ENCODE measurements at regions of chr9 and their contacts with region 1.

Region 1: DNA sequence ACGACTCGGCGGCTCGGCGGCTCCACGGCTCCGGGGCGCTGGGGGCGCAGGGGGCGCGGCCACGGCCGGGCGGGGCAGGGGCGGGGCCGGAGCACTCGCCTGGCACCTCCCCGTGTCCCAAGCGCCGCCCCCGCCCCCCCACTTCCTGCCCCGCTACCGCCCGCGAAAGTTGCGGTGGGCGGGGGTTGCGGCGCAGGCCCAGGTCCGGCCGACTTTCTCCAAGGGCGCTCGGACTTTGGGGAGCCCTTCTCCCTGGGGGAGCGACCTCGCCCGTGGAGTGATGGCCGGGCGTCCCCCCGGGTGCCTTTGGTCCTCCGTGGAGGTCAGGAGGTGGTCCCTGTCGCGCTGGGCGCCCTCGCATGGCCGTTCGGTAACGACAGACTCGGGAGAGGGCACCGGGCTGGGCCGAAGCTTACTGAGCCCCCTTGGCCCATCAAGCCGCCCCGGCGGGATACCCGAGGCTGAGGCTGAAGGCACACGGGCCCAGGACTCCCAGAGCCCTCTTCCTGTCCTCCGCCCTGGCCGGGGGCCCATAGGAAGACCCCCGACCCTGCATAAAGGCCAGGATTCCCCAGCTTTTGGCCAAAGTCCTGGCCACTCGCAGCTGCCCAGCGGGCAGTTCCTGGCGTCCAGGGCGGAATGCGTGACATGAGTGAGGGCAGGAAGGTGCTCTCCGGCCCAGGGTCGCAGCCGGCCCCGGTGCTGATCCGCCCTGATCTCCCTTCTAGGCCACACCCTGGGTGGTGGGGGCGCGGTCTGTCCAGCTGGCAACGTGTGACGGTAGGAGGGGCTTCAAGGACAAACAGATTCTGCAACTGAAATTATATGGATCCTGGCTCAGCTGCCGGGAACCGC is 883 bp upstream of the VAV2 start:
- DNase-seq: peak; percentile 52 to 89 (median 72)
- ATAC-seq: peak; percentile 78
- H3K4me3 ChIP-seq: peak overlapping the region; percentile 79
- H3K4me3 Mint-ChIP-seq: peak overlapping the region; percentile 84
- H3K27ac ChIP-seq: no peak overlapping the region
- H3K27ac Mint-ChIP-seq: no peak overlapping the region
- H3K4me1 ChIP-seq: peaks cover 29% of the 10 kb centered on the region
- H3K4me1 Mint-ChIP-seq: no peaks in the 10 kb centered on the region
- H3K27me3 ChIP-seq: peaks cover 6 to 7% of the 10 kb centered on the region in 2 experiments
- H3K27me3 Mint-ChIP-seq: peaks cover 18% of the 10 kb centered on the region
- CTCF ChIP-seq: peak; percentile 48

Region 2: GRCh38 chr9:133532937-133533668 is 459.9 kb before region 1 on chr9:
- CTCF ChIA-PET with region 1: no interaction called
- POLR2A ChIA-PET with region 1: no interaction called
- intact Hi-C with region 1: loop called (anchors 5 to 10 kb)
- DNase-seq: peak; percentile 47 to 83 (median 64)
- ATAC-seq: peak; percentile 82
- H3K4me3 ChIP-seq: no peak overlapping the region
- H3K4me3 Mint-ChIP-seq: peak overlapping the region; percentile 87
- H3K27ac ChIP-seq: no peak overlapping the region
- H3K27ac Mint-ChIP-seq: peak overlapping the region; percentile 85
- H3K4me1 ChIP-seq: peaks cover 26% of the 10 kb centered on the region
- H3K4me1 Mint-ChIP-seq: peaks cover 12% of the 10 kb centered on the region
- H3K27me3 ChIP-seq: peaks cover 0 to 10% of the 10 kb centered on the region in 2 experiments
- H3K27me3 Mint-ChIP-seq: peaks cover 6% of the 10 kb centered on the region
- CTCF ChIP-seq: peak; percentile 32

Region 3: DNA sequence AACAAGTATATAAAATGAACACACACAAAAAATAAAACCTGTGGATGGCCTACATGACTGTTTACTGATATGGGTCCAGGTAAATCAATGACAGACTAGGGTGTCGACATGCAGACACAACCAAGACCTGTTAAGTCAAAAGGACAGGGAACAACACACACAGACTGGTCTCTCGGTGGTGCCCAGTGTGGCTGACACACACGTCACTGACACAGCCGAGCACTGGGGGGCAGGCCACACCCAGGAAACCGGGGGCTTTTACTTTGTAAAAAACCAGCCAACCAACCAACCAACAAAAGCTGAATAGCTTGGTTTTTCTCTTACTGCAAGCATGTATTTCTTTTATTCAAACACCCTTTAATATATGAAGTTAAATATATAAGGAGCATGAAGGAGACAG is 388.8 kb before region 1 on chr9:
- CTCF ChIA-PET with region 1: no interaction called
- POLR2A ChIA-PET with region 1: no interaction called
- intact Hi-C with region 1: loop called in 1 of 2 experiments (anchors 2 kb)
- DNase-seq: peak in 11 of 14 experiments; percentile 13 to 58 (median 42)
- ATAC-seq: peak; percentile 46
- H3K4me3 ChIP-seq: no peak overlapping the region
- H3K4me3 Mint-ChIP-seq: no peak overlapping the region
- H3K27ac ChIP-seq: no peak overlapping the region
- H3K27ac Mint-ChIP-seq: no peak overlapping the region
- H3K4me1 ChIP-seq: peaks cover 8% of the 10 kb centered on the region
- H3K4me1 Mint-ChIP-seq: peaks cover 4% of the 10 kb centered on the region
- H3K27me3 ChIP-seq: peaks cover 14 to 24% of the 10 kb centered on the region in 2 experiments
- H3K27me3 Mint-ChIP-seq: peaks cover 19% of the 10 kb centered on the region
- CTCF ChIP-seq: no peak

Region 4: DNA sequence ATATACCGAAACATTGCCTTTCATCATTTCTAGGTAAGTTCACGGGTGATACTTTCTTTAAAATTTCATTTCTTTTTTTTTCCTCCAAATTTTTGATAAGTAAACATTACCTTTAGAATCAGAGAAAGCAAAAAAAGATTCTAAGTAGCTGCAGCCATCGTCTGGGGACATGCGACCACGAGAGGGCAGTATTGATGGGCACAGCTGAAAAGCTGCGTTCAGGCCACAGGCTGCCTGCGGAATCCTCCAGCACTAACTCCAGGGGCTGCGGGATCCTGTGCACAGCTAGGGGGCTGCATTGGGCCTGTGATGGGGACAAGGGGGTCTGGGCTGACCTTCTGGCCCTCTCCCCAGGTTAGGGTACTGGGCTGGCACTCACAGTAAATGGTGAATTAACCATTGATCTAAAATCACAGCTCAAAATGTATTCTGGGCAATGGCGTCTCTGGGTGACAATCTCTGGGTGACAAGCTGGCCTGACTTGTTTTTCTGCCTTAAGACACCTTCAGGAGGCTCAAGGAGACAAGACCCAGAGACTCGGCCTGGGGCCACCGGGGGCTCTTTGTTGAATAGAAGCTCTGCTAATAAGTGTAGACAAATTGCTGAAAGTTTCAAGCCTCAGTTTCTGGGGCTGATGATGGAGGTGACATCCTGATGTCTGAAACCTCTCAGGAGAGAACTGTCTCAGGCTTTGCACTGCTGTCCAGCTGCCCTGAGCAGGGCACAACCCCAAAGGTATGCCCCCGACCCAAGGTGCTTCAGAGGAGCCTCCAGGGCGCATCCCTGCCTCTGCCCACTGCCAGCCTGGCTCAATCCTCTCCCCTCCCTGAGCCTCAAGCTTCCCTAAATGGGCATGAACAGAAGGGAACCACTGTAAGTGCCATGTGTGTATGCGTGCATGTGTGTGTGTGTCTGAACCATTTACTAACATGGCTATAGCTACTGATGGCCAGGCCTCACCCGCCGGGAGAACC is 210.6 kb before region 1 on chr9:
- CTCF ChIA-PET with region 1: interaction called, 20 read pairs
- POLR2A ChIA-PET with region 1: interaction called, 12 read pairs
- intact Hi-C with region 1: loop called (anchors 1 kb)
- DNase-seq: peak; percentile 47 to 80 (median 60)
- ATAC-seq: peak; percentile 66
- H3K4me3 ChIP-seq: no peak overlapping the region
- H3K4me3 Mint-ChIP-seq: no peak overlapping the region
- H3K27ac ChIP-seq: no peak overlapping the region
- H3K27ac Mint-ChIP-seq: no peak overlapping the region
- H3K4me1 ChIP-seq: peaks cover 3% of the 10 kb centered on the region
- H3K4me1 Mint-ChIP-seq: no peaks in the 10 kb centered on the region
- H3K27me3 ChIP-seq: no peaks in the 10 kb centered on the region
- H3K27me3 Mint-ChIP-seq: no peaks in the 10 kb centered on the region
- CTCF ChIP-seq: peak; percentile 77

Region 5: DNA sequence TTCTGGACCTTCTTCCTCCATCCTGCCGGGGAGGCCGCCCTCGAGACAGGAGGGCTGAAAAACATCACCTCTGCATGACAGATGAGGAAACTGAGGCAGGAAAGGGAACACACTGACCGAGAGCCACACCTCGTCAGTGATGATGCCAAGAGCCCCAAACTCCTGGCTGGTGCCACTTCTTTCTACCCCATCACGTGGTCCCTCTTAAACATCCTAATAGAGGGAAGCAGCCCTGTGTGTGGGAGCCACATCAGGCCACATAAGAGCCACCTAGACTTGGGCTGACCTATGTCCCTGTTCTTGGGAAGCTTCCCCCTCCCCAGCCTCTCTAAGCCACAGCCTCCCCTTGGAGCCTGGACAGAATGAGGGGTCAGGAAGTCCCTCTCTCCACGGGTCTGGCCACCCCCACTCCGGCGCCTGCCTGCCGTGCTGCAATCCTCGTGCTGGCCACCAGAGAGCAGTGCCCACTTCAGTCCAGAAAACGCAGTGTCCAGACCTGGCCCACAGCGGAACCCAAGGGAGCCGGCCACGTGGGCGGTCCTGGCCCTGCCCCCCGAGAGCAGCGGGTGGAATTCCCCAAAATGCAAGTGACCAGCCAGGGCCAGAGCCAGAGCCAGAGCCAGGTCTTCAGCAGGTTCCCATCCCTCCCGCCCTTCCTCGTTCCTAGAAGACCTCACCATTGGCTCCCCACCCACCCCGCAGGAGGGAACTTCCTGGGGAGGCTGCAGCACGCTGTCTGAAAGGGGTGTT is 200.1 kb before region 1 on chr9:
- CTCF ChIA-PET with region 1: interaction called, 8 read pairs
- POLR2A ChIA-PET with region 1: no interaction called
- intact Hi-C with region 1: loop called (anchors 1 kb)
- DNase-seq: peak; percentile 13 to 75 (median 37)
- ATAC-seq: peak; percentile 57
- H3K4me3 ChIP-seq: no peak overlapping the region
- H3K4me3 Mint-ChIP-seq: no peak overlapping the region
- H3K27ac ChIP-seq: no peak overlapping the region
- H3K27ac Mint-ChIP-seq: no peak overlapping the region
- H3K4me1 ChIP-seq: peaks cover 10% of the 10 kb centered on the region
- H3K4me1 Mint-ChIP-seq: no peaks in the 10 kb centered on the region
- H3K27me3 ChIP-seq: no peaks in the 10 kb centered on the region
- H3K27me3 Mint-ChIP-seq: no peaks in the 10 kb centered on the region
- CTCF ChIP-seq: peak; percentile 77

Region 6: DNA sequence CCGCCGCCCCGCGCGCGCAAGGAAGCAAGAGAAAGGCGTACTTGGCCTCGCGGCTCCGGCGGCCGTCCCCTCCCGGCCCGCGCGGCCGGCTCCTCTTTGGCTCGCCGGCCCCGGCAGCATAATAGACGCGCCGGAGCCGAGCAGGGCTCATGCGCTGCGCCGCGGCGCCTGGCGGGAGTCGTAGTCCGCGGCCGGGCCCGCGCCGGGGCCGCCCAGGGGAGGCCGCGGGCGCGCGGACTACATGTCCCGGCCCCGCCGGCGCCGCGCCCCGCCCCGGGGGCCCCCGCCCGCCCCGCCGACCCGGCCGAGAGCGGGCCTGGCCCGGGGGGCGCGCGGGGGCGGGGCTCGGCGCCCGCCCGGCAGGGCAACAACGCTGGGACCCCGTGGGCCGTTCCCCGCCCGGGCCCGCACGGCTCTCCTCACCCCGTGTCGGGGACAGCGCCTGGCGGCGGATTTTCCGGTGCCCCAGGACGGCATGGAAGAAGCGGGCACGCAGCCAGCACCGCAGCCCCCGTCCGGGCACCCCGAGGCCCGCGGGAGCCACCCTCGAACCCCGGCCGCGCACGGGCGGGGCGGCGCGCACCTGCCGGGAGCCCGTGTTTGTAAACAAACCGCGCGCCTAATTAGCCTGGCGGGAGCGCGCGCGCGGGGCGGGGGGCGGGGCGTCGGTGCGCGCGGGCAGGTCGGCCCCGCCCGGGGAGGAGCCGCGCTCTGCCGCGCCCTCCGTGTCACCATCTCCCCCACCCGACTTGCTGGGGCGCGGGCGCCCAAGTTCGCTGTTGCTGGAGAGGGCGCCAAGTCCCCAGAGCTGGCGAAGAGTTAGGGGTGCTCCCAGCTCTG is 75.1 kb after region 1 on chr9 and contains the start of gene BRD3:
- CTCF ChIA-PET with region 1: no interaction called
- POLR2A ChIA-PET with region 1: no interaction called
- intact Hi-C with region 1: loop called in 1 of 2 experiments (anchors 2 kb)
- DNase-seq: peak; percentile 63 to 96 (median 78)
- ATAC-seq: peak; percentile 76
- H3K4me3 ChIP-seq: peak within 1 kb of the TSS; percentile 79
- H3K4me3 Mint-ChIP-seq: peak within 1 kb of the TSS; percentile 97
- H3K27ac ChIP-seq: peak within 1 kb of the TSS; percentile 79 to 84
- H3K27ac Mint-ChIP-seq: peak within 1 kb of the TSS; percentile 98
- H3K4me1 ChIP-seq: peaks cover 47% of the 10 kb centered on the region
- H3K4me1 Mint-ChIP-seq: peaks cover 37% of the 10 kb centered on the region
- H3K27me3 ChIP-seq: peaks cover 9 to 15% of the 10 kb centered on the region in 2 experiments
- H3K27me3 Mint-ChIP-seq: peaks cover 22% of the 10 kb centered on the region
- CTCF ChIP-seq: no peak
- total RNA-seq, gene BRD3: 26.7 to 29.0 TPM